ENCODE measurements at regions of chr18 and their contacts with region 1.

Region 1: GRCh38 chr18:60549338-60549960 is 176.9 kb upstream of the MC4R start:
- DNase-seq: no peak
- ATAC-seq: no peak
- H3K4me3 ChIP-seq: no peak overlapping the region
- H3K27ac ChIP-seq: no peak overlapping the region
- H3K4me1 ChIP-seq: no peaks in the 10 kb centered on the region
- H3K27me3 ChIP-seq: peaks cover 0 to 19% (median 0%) of the 10 kb centered on the region in 9 donors
- CTCF ChIP-seq: peak; percentile 47 to 80 (median 72)
- POLR2A ChIP-seq: no peak

Region 2: GRCh38 chr18:59837586-59837985 is 711.9 kb before region 1 on chr18:
- intact Hi-C with region 1: loop called in 7 of 10 experiments (anchors 5 to 10 kb)
- DNase-seq: peak in 2 of 5 donors; percentile 17 to 20
- ATAC-seq: peak in 2 of 4 donors; percentile 39 to 46
- H3K4me3 ChIP-seq: no peak overlapping the region
- H3K27ac ChIP-seq: no peak overlapping the region
- H3K4me1 ChIP-seq: no peaks in the 10 kb centered on the region
- H3K27me3 ChIP-seq: peaks cover 0 to 21% (median 0%) of the 10 kb centered on the region in 9 donors
- CTCF ChIP-seq: peak; percentile 71 to 90 (median 81)
- POLR2A ChIP-seq: no peak

Region 3: GRCh38 chr18:59846814-59847490 is 702.5 kb before region 1 on chr18:
- intact Hi-C with region 1: loop called in 1 of 10 experiments (anchors 10 kb)
- DNase-seq: no peak
- ATAC-seq: no peak
- H3K4me3 ChIP-seq: no peak overlapping the region
- H3K27ac ChIP-seq: no peak overlapping the region
- H3K4me1 ChIP-seq: peaks cover 0 to 6% (median 0%) of the 10 kb centered on the region in 12 donors
- H3K27me3 ChIP-seq: peaks cover 0 to 3% (median 0%) of the 10 kb centered on the region in 9 donors
- CTCF ChIP-seq: no peak
- POLR2A ChIP-seq: no peak

Region 4: DNA sequence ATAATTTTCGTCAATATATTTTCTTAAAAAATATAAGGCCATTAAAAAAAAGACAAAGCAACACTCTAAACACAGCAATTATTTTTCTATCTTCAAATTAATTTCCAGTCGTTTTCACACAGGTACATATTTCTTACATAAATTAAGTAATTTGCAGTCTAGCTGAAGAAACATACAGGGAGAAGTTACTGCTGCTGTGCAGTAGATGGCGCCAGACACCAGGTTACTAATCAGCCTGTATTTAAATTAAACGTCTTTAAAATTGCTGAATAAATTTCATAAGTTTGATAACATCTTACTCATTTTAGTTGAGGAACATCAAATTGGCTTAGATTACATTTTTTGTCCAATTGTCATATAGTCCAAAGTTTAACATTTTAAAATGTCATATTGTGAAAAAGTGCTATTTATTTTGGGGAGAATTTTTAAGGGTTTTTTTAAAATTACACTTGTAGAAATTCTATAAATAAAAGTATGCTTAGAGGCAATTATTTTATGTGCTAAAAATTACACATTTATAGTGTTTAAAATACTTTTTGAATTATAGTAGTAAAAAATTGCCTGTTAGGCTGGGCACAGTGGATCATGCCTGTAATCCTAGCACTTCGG is 561.2 kb before region 1 on chr18:
- intact Hi-C with region 1: loop called in 9 of 10 experiments (anchors 2 to 5 kb)
- DNase-seq: peak in 3 of 5 donors; percentile 19 to 28 (median 27)
- ATAC-seq: no peak
- H3K4me3 ChIP-seq: no peak overlapping the region
- H3K27ac ChIP-seq: no peak overlapping the region
- H3K4me1 ChIP-seq: no peaks in the 10 kb centered on the region
- H3K27me3 ChIP-seq: peaks cover 0 to 25% (median 4%) of the 10 kb centered on the region in 9 donors
- CTCF ChIP-seq: peak; percentile 74 to 98 (median 86)
- POLR2A ChIP-seq: no peak

Region 5: DNA sequence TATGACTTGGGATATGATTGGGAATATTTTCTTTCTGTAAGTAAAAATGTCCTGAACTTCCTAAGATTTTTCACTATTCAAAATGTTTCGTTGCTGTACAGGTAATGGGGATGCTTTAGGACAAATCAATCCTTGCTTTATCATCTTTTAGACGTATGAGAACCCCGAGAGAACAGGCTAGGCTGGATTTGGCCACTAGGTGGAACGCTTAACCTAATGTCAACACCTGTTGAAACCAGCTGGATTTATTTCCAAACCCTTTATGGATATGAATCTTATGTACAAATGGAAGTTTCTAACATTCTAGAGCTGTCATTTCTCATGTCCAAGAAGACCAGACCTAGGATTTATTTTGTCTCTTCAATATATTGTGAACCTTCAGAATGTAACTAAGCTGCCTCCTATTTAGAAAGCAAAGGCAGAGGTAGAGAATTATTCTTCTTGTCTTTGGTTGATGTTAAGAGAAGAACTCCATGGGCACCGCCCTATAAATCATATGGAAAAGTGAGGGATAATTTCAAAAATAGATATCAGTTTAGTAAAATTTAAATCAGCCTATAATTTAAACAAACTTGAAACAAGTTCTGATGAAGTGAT is 553.0 kb before region 1 on chr18:
- intact Hi-C with region 1: loop called in 3 of 10 experiments (anchors 5 kb)
- DNase-seq: no peak
- ATAC-seq: no peak
- H3K4me3 ChIP-seq: no peak overlapping the region
- H3K27ac ChIP-seq: no peak overlapping the region
- H3K4me1 ChIP-seq: no peaks in the 10 kb centered on the region
- H3K27me3 ChIP-seq: peaks cover 0 to 28% (median 4%) of the 10 kb centered on the region in 9 donors
- CTCF ChIP-seq: peak in 6 of 12 donors; percentile 9 to 44 (median 32)
- POLR2A ChIP-seq: no peak

Region 6: GRCh38 chr18:60082790-60083189 is 466.7 kb before region 1 on chr18:
- intact Hi-C with region 1: loop called in 1 of 10 experiments (anchors 10 kb)
- DNase-seq: no peak
- ATAC-seq: no peak
- H3K4me3 ChIP-seq: no peak overlapping the region
- H3K27ac ChIP-seq: no peak overlapping the region
- H3K4me1 ChIP-seq: no peaks in the 10 kb centered on the region
- H3K27me3 ChIP-seq: no peaks in the 10 kb centered on the region
- CTCF ChIP-seq: no peak
- POLR2A ChIP-seq: no peak

Region 7: GRCh38 chr18:60090170-60090569 is 459.3 kb before region 1 on chr18:
- intact Hi-C with region 1: loop called in 2 of 10 experiments (anchors 10 kb)
- DNase-seq: no peak
- ATAC-seq: no peak
- H3K4me3 ChIP-seq: no peak overlapping the region
- H3K27ac ChIP-seq: no peak overlapping the region
- H3K4me1 ChIP-seq: no peaks in the 10 kb centered on the region
- H3K27me3 ChIP-seq: no peaks in the 10 kb centered on the region
- CTCF ChIP-seq: peak in 3 of 12 donors; percentile 9 to 23 (median 20)
- POLR2A ChIP-seq: no peak